Ascending aorta (tissue), 2 donors: ENCODE measurements at regions of chr16 and their contacts with region 1.

Region 1: GRCh38 chr16:71461686-71462648 is at the start of gene ZNF23:
- DNase-seq: peak; percentile 18 to 91
- H3K4me3 ChIP-seq: peak within 1 kb of the TSS; percentile 91 to 96
- H3K27ac ChIP-seq: peak within 1 kb of the TSS; percentile 68 to 91
- H3K4me1 ChIP-seq: peaks cover 0 to 9% of the 10 kb centered on the region in 2 donors
- H3K27me3 ChIP-seq: no peaks in the 10 kb centered on the region
- CTCF ChIP-seq: no peak
- total RNA-seq, gene ZNF23: 0.43 TPM

Region 2: GRCh38 chr16:70800781-70801530 is 661.0 kb before region 1 on chr16 and contains the start of gene VAC14:
- intact Hi-C with region 1: loop called (anchors 10 kb)
- DNase-seq: peak; percentile 66 to 96
- H3K4me3 ChIP-seq: peak within 1 kb of the TSS; percentile 90 to 98
- H3K27ac ChIP-seq: peak within 1 kb of the TSS in 1 of 2 donors; percentile 49
- H3K4me1 ChIP-seq: peaks cover 9 to 10% of the 10 kb centered on the region in 2 donors
- H3K27me3 ChIP-seq: no peaks in the 10 kb centered on the region
- CTCF ChIP-seq: no peak
- total RNA-seq, gene VAC14: 75.1 TPM

Region 3: GRCh38 chr16:71484006-71484893 is 22.3 kb after region 1 on chr16:
- intact Hi-C with region 1: loop called (anchors 1 kb)
- DNase-seq: peak; percentile 33 to 92
- H3K4me3 ChIP-seq: peak overlapping the region; percentile 80 to 82
- H3K27ac ChIP-seq: peak overlapping the region; percentile 90 to 95
- H3K4me1 ChIP-seq: peaks cover 0 to 6% of the 10 kb centered on the region in 2 donors
- H3K27me3 ChIP-seq: no peaks in the 10 kb centered on the region
- CTCF ChIP-seq: no peak